ENCODE measurements at regions of chr7 and their contacts with region 1.

Region 1: GRCh38 chr7:112414855-112415490 is 35.3 kb upstream of the IFRD1 start:
- DNase-seq: peak; percentile 36
- ATAC-seq: peak; percentile 93
- H3K4me3 ChIP-seq: no peak overlapping the region
- H3K27ac ChIP-seq: no peak overlapping the region
- H3K4me1 ChIP-seq: no peaks in the 10 kb centered on the region
- H3K27me3 ChIP-seq: no peaks in the 10 kb centered on the region
- CTCF ChIP-seq: peak; percentile 60 to 68 (median 65); a peak in 5 of 6 replicates
- POLR2A ChIP-seq: no peak
- RAD21 ChIP-seq: peak; percentile 69

Region 2: GRCh38 chr7:111763221-111763801 is 651.7 kb before region 1 on chr7:
- CTCF ChIA-PET with region 1: interaction called, 4 read pairs
- POLR2A ChIA-PET with region 1: no interaction called
- RAD21 ChIA-PET with region 1: no interaction called
- intact Hi-C with region 1: loop called (anchors 1 kb)
- DNase-seq: peak; percentile 57
- ATAC-seq: peak; percentile 91
- H3K4me3 ChIP-seq: no peak overlapping the region
- H3K27ac ChIP-seq: no peak overlapping the region
- H3K4me1 ChIP-seq: no peaks in the 10 kb centered on the region
- H3K27me3 ChIP-seq: no peaks in the 10 kb centered on the region
- CTCF ChIP-seq: peak; percentile 55 to 86 (median 62)
- POLR2A ChIP-seq: no peak
- RAD21 ChIP-seq: peak; percentile 73

Region 3: GRCh38 chr7:111919631-111920179 is 495.3 kb before region 1 on chr7:
- CTCF ChIA-PET with region 1: no interaction called
- POLR2A ChIA-PET with region 1: no interaction called
- RAD21 ChIA-PET with region 1: no interaction called
- intact Hi-C with region 1: loop called (anchors 10 kb)
- DNase-seq: peak; percentile 43
- ATAC-seq: peak; percentile 82
- H3K4me3 ChIP-seq: no peak overlapping the region
- H3K27ac ChIP-seq: no peak overlapping the region
- H3K4me1 ChIP-seq: peaks cover 0 to 11% of the 10 kb centered on the region in 2 experiments; a peak in 1 of 4 replicates
- H3K27me3 ChIP-seq: peaks cover 20% of the 10 kb centered on the region
- CTCF ChIP-seq: no peak
- POLR2A ChIP-seq: no peak
- RAD21 ChIP-seq: 0 out of 2 replicates have a peak, but pooled peaks have one; percentile 5

Region 4: DNA sequence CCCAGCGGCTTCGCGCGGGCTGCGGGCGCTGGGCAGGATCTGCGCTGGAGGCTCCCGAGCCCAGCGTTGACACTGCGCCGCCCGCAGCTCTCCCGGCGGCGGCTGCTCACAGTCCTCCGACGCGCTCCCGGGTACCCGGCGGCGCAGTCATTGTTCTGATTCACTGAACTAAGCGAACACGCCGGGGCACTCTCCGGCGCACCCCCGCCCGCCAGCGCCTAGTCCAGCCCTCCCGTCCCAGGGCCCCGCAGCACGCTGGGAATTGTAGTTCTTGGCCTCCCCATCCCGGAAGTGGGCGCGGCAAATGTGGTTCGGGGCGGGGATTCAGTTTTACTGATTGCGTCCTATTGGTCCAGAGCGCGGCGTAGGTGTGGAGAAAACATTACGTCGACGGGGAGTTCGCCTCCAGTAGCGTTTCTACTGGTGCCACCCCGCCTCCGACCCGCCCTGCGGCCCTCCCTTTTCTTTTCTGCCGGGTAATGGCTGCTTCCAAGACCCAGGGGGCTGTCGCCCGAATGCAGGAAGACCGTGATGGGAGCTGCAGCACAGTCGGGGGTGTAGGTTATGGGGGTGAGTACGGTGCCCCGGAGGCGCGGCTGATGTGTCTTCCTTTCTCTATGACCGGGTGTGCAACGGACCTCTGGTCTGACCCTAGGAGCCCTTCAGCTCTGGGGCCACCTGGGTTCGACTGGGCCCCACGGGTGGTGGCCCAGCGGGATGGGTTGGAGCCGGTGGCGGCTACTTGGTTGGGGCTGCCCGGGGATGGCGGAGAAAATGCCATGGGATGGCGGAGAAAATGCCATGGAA is 208.5 kb before region 1 on chr7 and contains the starts of genes DOCK4 and ZNF277:
- CTCF ChIA-PET with region 1: no interaction called
- POLR2A ChIA-PET with region 1: no interaction called
- RAD21 ChIA-PET with region 1: no interaction called
- intact Hi-C with region 1: loop called (anchors 10 kb)
- DNase-seq: peak; percentile 96
- ATAC-seq: peak; percentile 89
- H3K4me3 ChIP-seq: peak within 1 kb of the TSS; percentile 73 to 76
- H3K27ac ChIP-seq: peak within 1 kb of the TSS; percentile 11; the same call in 1 of the 2 replicates
- H3K4me1 ChIP-seq: peaks cover 2 to 17% of the 10 kb centered on the region in 2 experiments; a peak in 3 of 4 replicates
- H3K27me3 ChIP-seq: peaks cover 21% of the 10 kb centered on the region
- CTCF ChIP-seq: no peak
- POLR2A ChIP-seq: no peak
- RAD21 ChIP-seq: no peak
- total RNA-seq, gene DOCK4: 2.2 TPM
- total RNA-seq, gene ZNF277: 21.3 TPM